Activated CD4-positive, alpha-beta T cell treated with anti-CD3 and anti-CD28 coated beads for 36 hours (primary cell): ENCODE measurements at regions of chr12 and their contacts with region 1.

Region 1: DNA sequence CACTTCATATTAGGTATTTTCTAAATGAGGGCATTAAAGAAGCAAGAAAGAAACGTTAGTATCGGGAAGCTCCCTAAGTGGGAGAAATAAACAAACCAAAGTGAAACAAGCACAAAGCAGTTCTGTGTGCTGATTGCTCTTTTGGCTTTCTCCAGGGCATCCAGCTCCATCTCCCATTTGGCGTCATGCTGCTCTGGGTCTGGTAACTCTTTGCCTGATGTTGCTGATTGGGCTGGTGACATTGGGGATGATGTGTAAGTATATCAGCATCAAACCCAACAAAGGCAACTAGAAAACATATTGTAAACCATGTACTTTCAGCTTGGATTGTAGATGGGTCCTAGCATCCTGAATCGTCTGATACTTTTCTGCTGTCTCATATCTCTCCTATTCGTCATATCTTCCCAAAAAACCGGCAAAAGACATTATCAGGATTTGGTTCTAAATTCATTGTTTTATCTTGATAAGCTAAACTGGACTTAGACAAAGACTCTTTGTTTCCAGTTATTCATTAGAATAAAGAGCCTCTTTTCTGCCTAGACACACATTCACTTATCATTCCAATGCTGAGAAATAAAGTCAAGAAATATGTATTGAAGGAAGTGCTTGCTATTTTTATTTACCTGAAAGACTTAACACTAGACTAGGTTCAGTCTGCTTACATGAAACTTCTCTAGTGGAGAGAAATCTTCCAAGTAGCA is 2.4 kb downstream of the CLEC12B start:
- DNase-seq: no peak
- ATAC-seq: no peak
- H3K4me3 Mint-ChIP-seq: no peak overlapping the region
- H3K27ac Mint-ChIP-seq: no peak overlapping the region
- H3K4me1 Mint-ChIP-seq: no peaks in the 10 kb centered on the region
- H3K27me3 Mint-ChIP-seq: peaks cover 7% of the 10 kb centered on the region

Region 2: GRCh38 chr12:9940375-9940774 is 72.4 kb before region 1 on chr12:
- CTCF ChIA-PET with region 1: no interaction called
- POLR2A ChIA-PET with region 1: no interaction called
- intact Hi-C with region 1: loop called in 1 of 2 experiments (anchors 2 kb)
- DNase-seq: no peak
- ATAC-seq: no peak
- H3K4me3 Mint-ChIP-seq: no peak overlapping the region
- H3K27ac Mint-ChIP-seq: no peak overlapping the region
- H3K4me1 Mint-ChIP-seq: peaks cover 14% of the 10 kb centered on the region
- H3K27me3 Mint-ChIP-seq: peaks cover 3% of the 10 kb centered on the region

Region 3: DNA sequence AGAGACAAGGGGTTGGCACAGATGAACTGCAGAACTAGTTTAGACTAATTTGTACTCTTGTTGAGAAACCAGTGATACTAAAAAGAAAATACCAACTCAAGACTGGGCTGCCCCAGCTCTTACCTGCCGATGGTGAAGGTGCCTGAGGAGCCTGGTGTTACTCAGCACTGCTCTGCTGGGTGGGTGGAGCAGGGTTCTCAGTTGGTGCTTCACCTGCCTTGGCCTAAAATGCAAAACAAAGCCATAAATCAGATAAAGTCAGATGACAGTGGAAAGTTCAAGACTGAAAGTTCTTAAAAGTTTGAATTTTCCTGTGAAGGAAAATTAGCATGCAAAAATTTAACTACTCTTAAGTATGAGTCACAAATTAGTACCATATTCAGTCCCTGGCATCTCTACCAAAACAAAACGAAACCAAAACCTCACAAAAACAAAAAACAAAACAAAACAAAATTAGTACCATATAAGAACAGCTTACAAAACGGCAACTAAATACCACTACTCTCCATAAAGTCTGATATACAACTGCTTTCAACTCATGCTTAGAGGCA is 688.4 kb after region 1 on chr12:
- CTCF ChIA-PET with region 1: no interaction called
- POLR2A ChIA-PET with region 1: no interaction called
- intact Hi-C with region 1: no loop called
- DNase-seq: peak; percentile 61
- ATAC-seq: peak; percentile 92
- H3K4me3 Mint-ChIP-seq: no peak overlapping the region
- H3K27ac Mint-ChIP-seq: peak overlapping the region; percentile 68
- H3K4me1 Mint-ChIP-seq: peaks cover 16% of the 10 kb centered on the region
- H3K27me3 Mint-ChIP-seq: no peaks in the 10 kb centered on the region